ENCODE measurements at regions of chr17 and their contacts with region 1.

Region 1: GRCh38 chr17:73539166-73539565 is 105.1 kb downstream of the SDK2 start:
- DNase-seq: no peak
- ATAC-seq: no peak
- H3K4me3 ChIP-seq: no peak overlapping the region
- H3K27ac ChIP-seq: no peak overlapping the region
- H3K4me1 ChIP-seq: no peaks in the 10 kb centered on the region
- H3K27me3 ChIP-seq: no peaks in the 10 kb centered on the region
- CTCF ChIP-seq: no peak

Region 2: DNA sequence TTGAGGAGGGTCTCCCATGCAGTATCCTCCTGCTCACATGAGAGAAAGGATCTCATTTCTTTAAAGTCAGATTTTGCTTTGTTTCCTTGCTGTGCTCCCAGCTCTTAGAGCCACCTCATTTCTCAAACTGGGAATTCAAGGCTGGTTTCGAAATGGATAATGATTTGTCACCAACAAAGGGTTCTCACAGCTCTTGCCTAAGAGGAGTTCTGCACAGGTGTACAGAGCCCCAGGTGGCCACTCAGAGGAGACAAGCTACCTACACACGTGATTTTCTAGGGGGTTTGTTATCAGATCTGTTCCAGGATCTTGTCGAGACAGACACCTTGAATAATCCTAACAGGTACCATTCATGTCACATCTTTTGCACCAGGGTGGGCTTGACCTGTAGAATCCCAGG is 37.7 kb before region 1 on chr17:
- intact Hi-C with region 1: loop called in 1 of 10 experiments (anchors 2 kb)
- DNase-seq: no peak
- ATAC-seq: no peak
- H3K4me3 ChIP-seq: no peak overlapping the region
- H3K27ac ChIP-seq: no peak overlapping the region
- H3K4me1 ChIP-seq: peaks cover 0 to 4% (median 0%) of the 10 kb centered on the region in 9 donors
- H3K27me3 ChIP-seq: peaks cover 0 to 5% (median 0%) of the 10 kb centered on the region in 7 donors
- CTCF ChIP-seq: no peak